Right lobe of liver (tissue), 6 donors: ENCODE measurements at regions of chr6 and their contacts with region 1.

Region 1: DNA sequence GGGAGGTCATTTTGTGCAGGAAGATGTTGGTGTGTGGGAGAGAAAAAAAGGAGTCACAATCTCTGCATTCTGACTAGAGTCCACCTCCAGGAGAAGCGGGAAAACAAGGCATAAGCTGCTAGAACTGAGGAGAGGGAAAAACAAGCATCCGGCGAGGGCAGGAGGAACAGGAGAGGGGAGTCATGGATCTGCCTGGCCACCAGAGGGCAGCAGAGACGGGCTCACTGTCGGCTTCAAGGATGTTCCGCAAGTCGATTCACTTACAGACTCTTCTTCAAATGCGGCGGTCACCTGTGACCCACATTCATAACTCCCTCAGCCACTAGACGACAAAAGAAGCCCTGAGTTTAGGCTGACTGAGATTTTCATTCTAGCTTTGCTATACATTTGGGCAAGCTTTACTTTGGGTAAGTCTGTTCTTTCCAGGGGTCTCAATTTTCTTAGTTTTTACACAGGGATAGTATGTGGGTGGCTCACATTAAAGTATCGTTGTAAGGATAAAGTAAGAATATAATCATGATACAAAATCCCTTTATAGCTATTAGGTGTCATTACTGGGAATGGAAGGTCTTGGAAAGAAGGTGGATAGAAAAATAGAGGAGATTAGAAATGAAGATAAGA is 6.6 kb upstream of the BTNL2 start:
- DNase-seq: peak; percentile 74 to 83 (median 80)
- ATAC-seq: peak; percentile 92 to 96 (median 94)
- H3K4me3 ChIP-seq: no peak overlapping the region
- H3K27ac ChIP-seq: no peak overlapping the region
- H3K4me1 ChIP-seq: no peaks in the 10 kb centered on the region
- H3K27me3 ChIP-seq: peaks cover 0 to 9% of the 10 kb centered on the region in 2 donors
- CTCF ChIP-seq: peak; percentile 75 to 98 (median 96)
- POLR2A ChIP-seq: no peak

Region 2: DNA sequence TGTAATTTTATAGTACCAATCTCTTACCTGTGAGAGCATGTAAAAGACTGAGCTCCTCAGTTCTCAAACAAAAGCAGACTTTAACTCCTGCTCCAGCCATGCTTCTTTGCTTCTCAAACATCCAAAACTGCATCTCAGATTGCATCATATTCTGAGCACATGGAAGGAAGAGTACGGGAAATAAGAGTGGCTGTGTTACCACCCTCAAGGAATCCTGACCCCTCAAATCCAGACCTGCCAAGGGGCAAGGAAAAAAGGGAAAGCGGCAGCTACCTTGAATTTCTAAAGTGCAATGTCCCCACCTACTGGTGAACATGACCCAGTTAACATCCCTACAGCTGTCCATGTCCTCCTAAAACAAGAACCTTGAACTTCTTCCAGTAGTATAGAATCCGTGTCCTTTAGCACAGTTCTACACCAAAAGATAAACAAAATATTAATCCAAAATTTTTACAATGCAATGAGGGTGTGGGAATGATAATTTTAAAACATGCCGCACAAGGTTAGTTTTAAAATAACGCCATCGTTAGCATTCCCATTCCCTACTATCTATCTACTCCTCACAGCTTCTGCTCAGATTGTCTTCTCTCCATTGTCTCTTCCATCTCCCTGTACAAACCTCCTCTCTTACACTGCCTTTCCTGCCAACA is 287.0 kb after region 1 on chr6:
- intact Hi-C with region 1: loop called in 1 of 2 experiments (anchors 5 kb)
- DNase-seq: peak in 1 of 3 donors; percentile 49
- ATAC-seq: peak; percentile 82 to 92 (median 84)
- H3K4me3 ChIP-seq: no peak overlapping the region
- H3K27ac ChIP-seq: no peak overlapping the region
- H3K4me1 ChIP-seq: no peaks in the 10 kb centered on the region
- H3K27me3 ChIP-seq: no peaks in the 10 kb centered on the region
- CTCF ChIP-seq: peak; percentile 51 to 77 (median 66)
- POLR2A ChIP-seq: no peak

Region 3: DNA sequence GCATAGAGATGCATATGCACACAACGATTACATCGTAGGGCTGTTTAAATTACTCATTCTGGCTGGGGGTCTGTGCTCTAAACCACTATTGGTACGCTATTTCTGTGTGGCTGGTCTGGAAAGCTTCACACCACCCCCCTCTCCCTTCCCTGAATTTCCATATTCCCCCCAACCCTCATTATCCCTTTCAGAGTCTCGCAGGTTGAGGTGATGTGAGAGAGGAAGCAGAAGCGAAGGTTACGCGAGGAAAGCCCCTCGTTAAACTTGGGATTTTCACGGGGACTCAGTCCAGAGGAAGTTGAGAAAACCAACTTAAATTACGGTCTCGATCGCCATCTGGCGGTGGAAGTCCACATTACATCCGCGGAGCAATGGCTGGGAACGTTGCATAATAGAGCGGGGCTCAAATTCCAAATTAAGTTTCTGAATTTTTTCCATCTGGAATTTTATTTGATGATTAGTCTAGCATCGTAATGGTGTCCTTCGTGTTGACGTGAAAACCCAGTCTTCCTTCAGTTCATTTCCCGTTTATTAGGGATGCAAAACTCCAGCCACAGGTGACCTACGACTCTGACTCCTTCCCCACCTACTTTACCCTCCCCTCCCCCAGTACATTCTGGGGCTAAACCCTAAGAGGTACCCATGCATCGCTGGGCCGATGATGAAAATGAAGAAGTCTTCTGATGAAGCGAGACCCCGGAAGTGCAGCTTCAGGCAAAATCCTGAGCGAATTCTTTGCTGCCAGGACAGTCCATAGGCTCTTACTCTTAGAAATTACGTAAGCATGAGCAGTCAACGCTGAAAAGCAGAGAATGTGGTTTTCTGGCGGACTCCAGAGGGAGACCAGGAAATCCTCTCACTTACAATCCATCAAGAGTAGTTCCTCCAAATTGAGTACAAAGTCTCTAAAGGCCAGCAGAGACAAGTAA is 383.6 kb after region 1 on chr6:
- intact Hi-C with region 1: loop called in 1 of 2 experiments (anchors 10 kb)
- DNase-seq: peak; percentile 67 to 77 (median 74)
- ATAC-seq: peak; percentile 81 to 93 (median 89)
- H3K4me3 ChIP-seq: no peak overlapping the region
- H3K27ac ChIP-seq: no peak overlapping the region
- H3K4me1 ChIP-seq: no peaks in the 10 kb centered on the region
- H3K27me3 ChIP-seq: no peaks in the 10 kb centered on the region
- CTCF ChIP-seq: peak; percentile 86 to 89 (median 88)
- POLR2A ChIP-seq: no peak

Region 4: GRCh38 chr6:32853541-32854375 is 440.2 kb after region 1 on chr6 and contains the starts of genes PSMB9 and TAP1:
- intact Hi-C with region 1: no loop called
- DNase-seq: peak; percentile 97
- ATAC-seq: peak; percentile 90 to 94 (median 92)
- H3K4me3 ChIP-seq: peak within 1 kb of the TSS; percentile 96 to 99 (median 98)
- H3K27ac ChIP-seq: peak within 1 kb of the TSS; percentile 97 to 99 (median 98)
- H3K4me1 ChIP-seq: peaks cover 0 to 19% (median 4%) of the 10 kb centered on the region in 4 donors
- H3K27me3 ChIP-seq: no peaks in the 10 kb centered on the region
- CTCF ChIP-seq: peak; percentile 82 to 89 (median 86)
- POLR2A ChIP-seq: peak; percentile 92
- total RNA-seq, gene PSMB9: 7.1 to 33.2 (median 18.0) TPM
- total RNA-seq, gene TAP1: 7.7 to 24.9 (median 17.8) TPM